Heart right ventricle (tissue), 16 donors: ENCODE measurements at regions of chr3 and their contacts with region 1.

Region 1: GRCh38 chr3:177724020-177724638 is 526.8 kb upstream of the TBL1XR1 start:
- DNase-seq: peak; percentile 46 to 71
- ATAC-seq: peak; percentile 84 to 98 (median 94)
- H3K4me3 ChIP-seq: no peak overlapping the region
- H3K27ac ChIP-seq: peak overlapping the region; percentile 42 to 79 (median 64)
- H3K4me1 ChIP-seq: peaks cover 2 to 54% (median 40%) of the 10 kb centered on the region in 9 donors
- H3K27me3 ChIP-seq: no peaks in the 10 kb centered on the region
- CTCF ChIP-seq: no peak

Region 2: DNA sequence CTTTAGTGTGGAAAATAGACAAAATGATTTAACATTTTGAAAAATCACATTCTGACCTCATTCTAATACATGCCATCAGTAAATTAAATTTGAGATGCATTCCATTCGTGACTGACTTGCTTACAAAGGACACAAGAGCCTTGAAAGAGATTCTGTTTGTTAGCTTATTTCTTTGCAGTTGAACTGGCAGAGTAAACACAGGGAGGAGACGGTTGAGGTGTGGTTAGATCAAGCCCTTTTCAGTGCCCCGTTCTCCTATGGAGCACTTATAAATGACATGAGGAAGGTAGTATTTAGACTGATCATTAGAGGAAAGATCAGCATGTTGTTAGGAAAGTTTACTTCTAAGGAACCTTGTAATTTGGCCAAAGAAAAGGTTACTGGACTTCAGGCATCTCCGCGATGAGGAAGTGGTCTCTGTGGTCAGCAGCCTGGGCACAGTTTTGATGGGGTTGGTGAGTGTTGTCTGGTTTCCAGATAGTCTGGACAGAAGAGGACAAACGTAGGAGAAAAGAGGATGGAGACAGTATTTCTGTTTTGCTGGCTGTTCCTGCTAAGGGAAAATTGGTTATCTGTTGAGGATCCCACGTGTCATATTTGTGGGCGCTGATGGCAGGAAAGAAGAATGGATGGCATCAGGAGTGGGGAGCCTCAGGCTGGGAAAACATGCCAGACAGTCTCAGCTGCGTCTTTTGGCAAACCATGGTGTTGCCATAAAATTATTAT is 198.0 kb before region 1 on chr3:
- intact Hi-C with region 1: loop called in 1 of 10 experiments (anchors 10 kb)
- DNase-seq: no peak
- ATAC-seq: no peak
- H3K4me3 ChIP-seq: no peak overlapping the region
- H3K27ac ChIP-seq: peak overlapping the region in 1 of 10 donors; percentile 26
- H3K4me1 ChIP-seq: peaks cover 0 to 34% (median 0%) of the 10 kb centered on the region in 9 donors
- H3K27me3 ChIP-seq: no peaks in the 10 kb centered on the region
- CTCF ChIP-seq: no peak

Region 3: DNA sequence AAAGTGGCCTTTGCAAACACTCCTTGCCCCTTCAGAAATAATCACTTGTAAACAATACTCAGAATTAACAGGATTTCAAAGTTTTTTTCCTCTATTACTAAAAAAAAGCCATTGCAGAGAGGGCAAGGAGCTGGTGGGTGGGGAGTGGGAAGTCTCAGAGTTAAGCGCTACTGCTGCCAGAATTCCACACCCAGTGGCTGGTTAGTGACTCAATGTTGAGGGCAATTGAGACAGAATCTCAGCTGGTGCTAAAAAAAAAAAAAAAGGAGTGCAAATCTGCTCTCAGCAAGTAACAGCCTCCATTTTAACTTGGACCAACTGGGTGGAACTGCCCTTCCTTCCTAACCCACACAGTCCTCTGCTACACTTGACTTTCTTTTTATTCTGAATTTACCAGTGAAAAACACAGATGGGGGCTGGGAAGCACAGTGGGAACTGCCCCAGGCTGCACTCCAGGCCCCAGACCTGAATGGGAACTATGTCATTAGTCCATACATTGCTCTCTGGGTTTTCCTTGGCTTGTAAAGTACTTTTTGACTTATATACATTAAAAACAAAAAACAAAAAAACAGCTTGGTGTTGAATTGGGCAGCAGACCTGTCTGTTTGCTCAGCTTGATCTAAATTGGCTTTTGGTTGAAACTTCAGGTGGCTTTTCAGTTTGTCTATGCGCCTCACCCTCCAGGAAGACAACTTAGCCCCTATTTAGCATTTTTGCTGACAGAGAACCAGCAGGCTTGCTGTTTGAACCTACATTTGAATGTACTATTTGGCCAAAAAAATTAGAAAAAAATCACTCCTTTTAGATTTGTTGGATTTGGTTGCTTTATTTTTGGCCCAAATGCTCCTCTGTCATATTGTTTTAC is 169.0 kb before region 1 on chr3:
- intact Hi-C with region 1: no loop called
- DNase-seq: no peak
- ATAC-seq: peak in 4 of 8 donors; percentile 44 to 81 (median 63)
- H3K4me3 ChIP-seq: no peak overlapping the region
- H3K27ac ChIP-seq: peak overlapping the region in 2 of 10 donors; percentile 19 to 48
- H3K4me1 ChIP-seq: peaks cover 0 to 19% (median 8%) of the 10 kb centered on the region in 9 donors
- H3K27me3 ChIP-seq: no peaks in the 10 kb centered on the region
- CTCF ChIP-seq: no peak

Region 4: DNA sequence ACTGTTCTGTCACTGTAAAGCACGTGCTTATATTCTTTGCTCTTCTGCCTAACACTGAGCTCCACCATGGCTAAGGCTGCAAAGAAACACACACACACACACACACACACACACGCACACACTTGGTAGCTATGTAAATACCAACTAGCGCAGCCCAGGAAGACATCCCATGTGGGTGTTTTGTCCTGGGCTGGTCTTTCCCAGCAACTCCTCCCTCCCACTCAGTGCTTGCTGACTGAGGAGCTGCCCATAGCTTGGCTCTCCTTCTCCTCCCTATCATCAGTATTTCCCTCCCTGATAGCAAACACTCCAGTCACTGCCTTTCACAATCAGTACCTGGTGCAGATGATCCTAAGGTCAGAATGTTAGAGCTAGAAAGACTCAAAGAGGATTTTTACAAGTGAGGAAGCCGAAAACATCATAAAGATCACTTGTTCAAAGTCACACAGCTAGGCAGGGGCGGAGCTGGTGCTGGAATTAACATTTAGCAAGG is 149.8 kb before region 1 on chr3:
- intact Hi-C with region 1: no loop called
- DNase-seq: peak in 1 of 2 donors; percentile 38
- ATAC-seq: peak in 7 of 8 donors; percentile 44 to 76 (median 61)
- H3K4me3 ChIP-seq: no peak overlapping the region
- H3K27ac ChIP-seq: no peak overlapping the region
- H3K4me1 ChIP-seq: peaks cover 0 to 20% (median 3%) of the 10 kb centered on the region in 9 donors
- H3K27me3 ChIP-seq: no peaks in the 10 kb centered on the region
- CTCF ChIP-seq: no peak